Thyroid gland (tissue), 4 donors: ENCODE measurements at regions of chr6 and their contacts with region 1.

Region 1: DNA sequence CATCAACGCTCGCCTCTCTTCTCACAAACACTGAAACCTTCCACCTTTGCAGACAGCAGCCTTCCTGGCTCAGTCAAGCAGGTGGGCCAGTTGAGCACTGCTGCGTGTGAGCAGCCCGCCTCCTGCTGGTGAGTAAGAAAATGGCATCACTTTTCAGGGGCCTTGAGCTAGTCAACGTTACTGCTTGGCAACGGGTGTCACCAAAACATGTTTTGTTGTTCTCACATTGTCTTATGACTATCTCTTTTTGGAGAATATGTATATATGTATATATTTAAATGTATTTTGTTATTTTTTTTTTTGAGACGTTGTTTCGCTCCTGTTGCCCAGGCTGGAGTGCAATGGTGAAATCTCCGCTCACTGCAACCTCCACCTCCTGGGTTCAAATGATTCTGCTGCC is 97.0 kb upstream of the AGPAT4 start:
- DNase-seq: peak; percentile 64 to 76
- H3K4me3 ChIP-seq: no peak overlapping the region
- H3K27ac ChIP-seq: no peak overlapping the region
- H3K4me1 ChIP-seq: peaks cover 0 to 3% of the 10 kb centered on the region in 2 donors
- H3K27me3 ChIP-seq: no peaks in the 10 kb centered on the region
- CTCF ChIP-seq: peak; percentile 73 to 91 (median 86)
- POLR2A ChIP-seq: no peak

Region 2: GRCh38 chr6:160733050-160733646 is 637.7 kb before region 1 on chr6:
- intact Hi-C with region 1: loop called (anchors 10 kb)
- DNase-seq: peak; percentile 10 to 25
- H3K4me3 ChIP-seq: no peak overlapping the region
- H3K27ac ChIP-seq: no peak overlapping the region
- H3K4me1 ChIP-seq: no peaks in the 10 kb centered on the region
- H3K27me3 ChIP-seq: no peaks in the 10 kb centered on the region
- CTCF ChIP-seq: peak in 4 of 6 experiments; percentile 18 to 56 (median 42)
- POLR2A ChIP-seq: no peak

Region 3: GRCh38 chr6:160930547-160931377 is 440.1 kb before region 1 on chr6:
- intact Hi-C with region 1: loop called (anchors 2 kb)
- DNase-seq: peak; percentile 72 to 76
- H3K4me3 ChIP-seq: peak overlapping the region in 2 of 3 donors; percentile 14 to 35
- H3K27ac ChIP-seq: no peak overlapping the region
- H3K4me1 ChIP-seq: peaks cover 3 to 9% of the 10 kb centered on the region in 2 donors
- H3K27me3 ChIP-seq: no peaks in the 10 kb centered on the region
- CTCF ChIP-seq: peak; percentile 57 to 92 (median 87)
- POLR2A ChIP-seq: no peak

Region 4: DNA sequence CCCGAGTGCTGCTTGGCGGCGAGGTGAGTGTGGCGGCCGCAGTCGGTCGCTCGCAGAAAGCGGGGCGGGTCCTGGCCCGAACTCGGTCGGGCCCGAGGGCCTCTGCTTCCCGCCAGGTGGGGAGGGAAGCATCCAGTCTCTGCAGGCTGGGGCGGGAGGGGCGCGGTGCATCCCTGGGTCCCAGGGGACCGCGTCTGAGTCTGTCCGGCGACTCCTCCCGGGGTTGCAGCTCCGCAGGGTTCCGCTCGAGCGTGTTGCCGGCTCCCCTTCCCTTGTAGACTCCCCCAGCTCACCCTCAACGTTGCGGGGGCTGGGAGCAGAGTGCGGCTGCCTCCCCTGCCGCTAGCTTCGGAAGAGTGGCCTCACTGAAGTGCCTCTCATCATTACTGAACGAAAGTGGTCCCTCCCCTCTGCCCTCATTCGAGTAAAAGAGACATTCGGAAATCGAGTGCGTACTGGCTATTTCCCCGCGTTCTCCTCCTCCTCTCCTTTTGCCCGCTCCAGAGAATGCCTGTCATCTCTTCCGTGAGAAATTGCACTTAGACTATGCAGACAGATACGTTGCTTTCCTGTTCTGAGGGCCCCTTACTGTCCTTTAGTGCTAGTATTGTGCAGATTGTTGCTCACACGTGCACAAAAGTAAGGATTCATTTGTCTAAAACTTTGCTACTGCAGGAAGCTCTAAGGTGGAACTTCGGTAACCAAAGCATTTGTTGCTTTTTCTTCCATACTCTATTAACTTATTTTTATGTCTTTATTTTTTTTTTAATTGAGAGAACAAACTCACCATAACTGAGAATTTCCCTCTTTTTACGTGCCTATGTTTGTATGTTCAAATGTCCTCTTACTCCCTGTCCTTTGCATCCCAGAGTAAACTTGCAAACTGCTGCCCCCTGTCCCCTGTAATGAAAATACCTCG is 378.6 kb before region 1 on chr6:
- intact Hi-C with region 1: loop called (anchors 5 kb)
- DNase-seq: peak; percentile 38 to 55
- H3K4me3 ChIP-seq: peak overlapping the region; percentile 96 to 99 (median 99)
- H3K27ac ChIP-seq: peak overlapping the region; percentile 69 to 94 (median 92)
- H3K4me1 ChIP-seq: peaks cover 4 to 7% of the 10 kb centered on the region in 2 donors
- H3K27me3 ChIP-seq: no peaks in the 10 kb centered on the region
- CTCF ChIP-seq: peak in 4 of 6 experiments; percentile 29 to 55 (median 42)
- POLR2A ChIP-seq: no peak

Region 5: DNA sequence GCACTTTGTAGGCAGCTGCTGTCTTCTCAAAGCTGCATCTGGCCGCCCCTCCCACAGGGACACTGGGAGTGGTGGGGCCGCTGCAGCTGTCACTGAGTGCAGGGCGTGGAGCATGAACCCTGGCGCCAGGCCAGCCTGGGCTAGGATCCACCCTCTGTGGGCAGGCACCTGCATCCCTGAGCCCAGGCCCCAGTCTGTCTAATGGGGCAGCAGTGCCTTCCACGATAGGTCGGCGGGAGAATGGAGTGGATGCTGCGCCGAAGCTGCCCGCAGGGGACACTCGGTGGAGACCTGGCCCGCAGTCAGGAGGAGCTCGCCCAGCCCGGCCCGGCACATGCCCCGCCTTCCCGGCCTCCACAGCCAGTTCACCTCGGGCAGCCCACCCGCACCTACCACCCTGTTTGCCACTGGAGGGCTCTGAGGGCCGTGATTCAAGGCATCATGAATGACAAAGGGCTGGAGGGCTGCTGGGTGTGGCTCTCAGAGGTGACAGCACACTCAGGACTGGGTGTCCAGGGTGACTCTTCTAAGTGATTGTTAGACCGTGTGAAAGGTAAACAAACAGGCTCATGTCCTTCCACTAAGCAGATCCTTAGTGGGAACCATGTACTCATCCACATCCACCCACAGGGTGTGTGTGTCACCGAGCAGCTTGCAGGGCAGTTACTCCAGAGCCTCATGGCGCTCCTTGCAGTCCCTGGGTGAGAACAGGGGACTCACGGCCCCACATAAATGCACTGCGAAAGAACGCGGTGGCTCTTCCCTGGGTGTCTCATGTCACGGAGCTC is 230.9 kb before region 1 on chr6:
- intact Hi-C with region 1: loop called (anchors 5 kb)
- DNase-seq: no peak
- H3K4me3 ChIP-seq: no peak overlapping the region
- H3K27ac ChIP-seq: no peak overlapping the region
- H3K4me1 ChIP-seq: peaks cover 6 to 16% of the 10 kb centered on the region in 2 donors
- H3K27me3 ChIP-seq: no peaks in the 10 kb centered on the region
- CTCF ChIP-seq: peak in 2 of 6 experiments; percentile 35 to 52
- POLR2A ChIP-seq: no peak

Region 6: DNA sequence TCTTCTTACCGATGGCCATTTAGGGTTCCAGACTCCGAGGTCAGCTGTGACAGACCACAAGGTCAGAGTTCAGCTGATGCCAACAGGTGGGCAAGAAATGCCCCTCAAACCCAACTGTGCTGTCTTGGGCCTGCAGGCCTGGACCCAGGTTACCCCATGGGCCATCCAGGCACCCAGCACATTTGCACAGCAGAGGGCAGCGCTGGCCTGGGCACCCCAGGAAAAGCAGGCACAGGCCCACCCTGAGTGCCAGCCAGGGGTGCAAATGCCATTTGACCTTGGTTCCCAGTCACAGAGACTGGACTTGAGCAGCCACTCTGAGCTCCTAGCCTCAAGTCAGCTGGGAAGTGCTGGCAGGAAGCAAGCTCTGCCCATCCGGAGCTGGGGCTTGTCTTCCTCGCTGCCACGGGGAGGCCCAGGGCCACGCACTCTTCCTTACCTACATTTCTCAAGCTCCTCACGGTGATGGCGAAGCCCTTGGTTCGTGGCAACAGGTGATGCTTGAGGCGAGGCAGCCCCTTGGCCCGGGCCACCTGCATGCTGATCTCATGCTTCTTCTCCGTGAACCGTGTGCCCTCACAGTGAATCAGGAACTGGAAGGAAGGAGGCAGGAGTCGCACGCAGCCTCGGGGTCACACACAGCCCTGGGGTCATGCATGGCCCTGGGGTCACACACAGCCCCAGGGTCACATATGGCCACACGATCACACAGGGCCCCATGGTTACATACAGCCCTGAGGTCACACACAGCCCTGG is 217.8 kb before region 1 on chr6:
- intact Hi-C with region 1: loop called (anchors 5 kb)
- DNase-seq: peak in 1 of 2 donors; percentile 15
- H3K4me3 ChIP-seq: no peak overlapping the region
- H3K27ac ChIP-seq: no peak overlapping the region
- H3K4me1 ChIP-seq: no peaks in the 10 kb centered on the region
- H3K27me3 ChIP-seq: no peaks in the 10 kb centered on the region
- CTCF ChIP-seq: peak in 5 of 6 experiments; percentile 14 to 55 (median 43)
- POLR2A ChIP-seq: no peak

Region 7: GRCh38 chr6:161523362-161523761 is 152.5 kb after region 1 on chr6:
- intact Hi-C with region 1: no loop called
- DNase-seq: no peak
- H3K4me3 ChIP-seq: no peak overlapping the region
- H3K27ac ChIP-seq: no peak overlapping the region
- H3K4me1 ChIP-seq: no peaks in the 10 kb centered on the region
- H3K27me3 ChIP-seq: no peaks in the 10 kb centered on the region
- CTCF ChIP-seq: no peak
- POLR2A ChIP-seq: no peak